Naive thymus-derived CD8-positive, alpha-beta T cell (primary cell): ENCODE measurements at regions of chr2 and their contacts with region 1.

Region 1: GRCh38 chr2:85595301-85596025 is at the start of gene RNF181:
- DNase-seq: peak; percentile 73 to 96 (median 90)
- ATAC-seq: peak; percentile 98 to 99
- H3K4me3 Mint-ChIP-seq: peak within 1 kb of the TSS; percentile 96 to 100 (median 98)
- H3K27ac Mint-ChIP-seq: peak within 1 kb of the TSS; percentile 96 to 100 (median 98)
- H3K4me1 Mint-ChIP-seq: peaks cover 19 to 51% (median 36%) of the 10 kb centered on the region in 4 donors
- H3K27me3 Mint-ChIP-seq: no peaks in the 10 kb centered on the region
- polyA plus RNA-seq, gene RNF181: 165 to 206 (median 173) TPM

Region 2: GRCh38 chr2:85501248-85501647 is 94.2 kb before region 1 on chr2:
- POLR2A ChIA-PET with region 1: no interaction called
- DNase-seq: no peak
- ATAC-seq: no peak
- H3K4me3 Mint-ChIP-seq: no peak overlapping the region
- H3K27ac Mint-ChIP-seq: no peak overlapping the region
- H3K4me1 Mint-ChIP-seq: peaks cover 0 to 8% (median 2%) of the 10 kb centered on the region in 4 donors
- H3K27me3 Mint-ChIP-seq: no peaks in the 10 kb centered on the region

Region 3: GRCh38 chr2:85516653-85517406 is 78.6 kb before region 1 on chr2:
- POLR2A ChIA-PET with region 1: no interaction called
- DNase-seq: no peak
- ATAC-seq: no peak
- H3K4me3 Mint-ChIP-seq: no peak overlapping the region
- H3K27ac Mint-ChIP-seq: peak overlapping the region in 2 of 10 donors; percentile 22 to 90
- H3K4me1 Mint-ChIP-seq: peaks cover 0 to 2% (median 0%) of the 10 kb centered on the region in 4 donors
- H3K27me3 Mint-ChIP-seq: no peaks in the 10 kb centered on the region

Region 4: GRCh38 chr2:85538486-85539360 is 56.7 kb before region 1 on chr2 and contains the start of gene MAT2A:
- POLR2A ChIA-PET with region 1: interaction called, 23 read pairs
- DNase-seq: peak; percentile 71 to 91 (median 86)
- ATAC-seq: peak; percentile 74 to 76
- H3K4me3 Mint-ChIP-seq: peak within 1 kb of the TSS; percentile 91 to 96 (median 95)
- H3K27ac Mint-ChIP-seq: peak within 1 kb of the TSS; percentile 90 to 98 (median 95)
- H3K4me1 Mint-ChIP-seq: peaks cover 21 to 50% (median 40%) of the 10 kb centered on the region in 4 donors
- H3K27me3 Mint-ChIP-seq: no peaks in the 10 kb centered on the region
- polyA plus RNA-seq, gene MAT2A: 68.1 to 103 (median 73.0) TPM

Region 5: GRCh38 chr2:85551698-85552678 is 43.5 kb before region 1 on chr2:
- POLR2A ChIA-PET with region 1: interaction called, 13 read pairs
- DNase-seq: peak; percentile 78 to 95 (median 90)
- ATAC-seq: peak; percentile 97 to 99
- H3K4me3 Mint-ChIP-seq: no peak overlapping the region
- H3K27ac Mint-ChIP-seq: peak overlapping the region in 8 of 10 donors; percentile 29 to 75 (median 50)
- H3K4me1 Mint-ChIP-seq: peaks cover 4 to 7% (median 6%) of the 10 kb centered on the region in 4 donors
- H3K27me3 Mint-ChIP-seq: no peaks in the 10 kb centered on the region

Region 6: GRCh38 chr2:85577386-85578242 is 17.8 kb before region 1 on chr2 and contains the start of gene VAMP8:
- POLR2A ChIA-PET with region 1: interaction called, 88 read pairs
- DNase-seq: peak; percentile 41 to 80 (median 49)
- ATAC-seq: peak; percentile 81 to 86
- H3K4me3 Mint-ChIP-seq: peak within 1 kb of the TSS; percentile 88 to 98 (median 94)
- H3K27ac Mint-ChIP-seq: peak within 1 kb of the TSS; percentile 88 to 98 (median 93)
- H3K4me1 Mint-ChIP-seq: peaks cover 23 to 43% (median 43%) of the 10 kb centered on the region in 4 donors
- H3K27me3 Mint-ChIP-seq: no peaks in the 10 kb centered on the region
- polyA plus RNA-seq, gene VAMP8: 321 to 405 (median 373) TPM

Region 7: GRCh38 chr2:85584857-85585783 is 10.3 kb before region 1 on chr2:
- POLR2A ChIA-PET with region 1: interaction called, 88 read pairs
- DNase-seq: peak in 3 of 10 donors; percentile 20 to 42 (median 40)
- ATAC-seq: peak; percentile 55 to 59
- H3K4me3 Mint-ChIP-seq: peak overlapping the region; percentile 80 to 93 (median 89)
- H3K27ac Mint-ChIP-seq: peak overlapping the region; percentile 86 to 97 (median 93)
- H3K4me1 Mint-ChIP-seq: peaks cover 34 to 76% (median 65%) of the 10 kb centered on the region in 4 donors
- H3K27me3 Mint-ChIP-seq: no peaks in the 10 kb centered on the region

Region 8: DNA sequence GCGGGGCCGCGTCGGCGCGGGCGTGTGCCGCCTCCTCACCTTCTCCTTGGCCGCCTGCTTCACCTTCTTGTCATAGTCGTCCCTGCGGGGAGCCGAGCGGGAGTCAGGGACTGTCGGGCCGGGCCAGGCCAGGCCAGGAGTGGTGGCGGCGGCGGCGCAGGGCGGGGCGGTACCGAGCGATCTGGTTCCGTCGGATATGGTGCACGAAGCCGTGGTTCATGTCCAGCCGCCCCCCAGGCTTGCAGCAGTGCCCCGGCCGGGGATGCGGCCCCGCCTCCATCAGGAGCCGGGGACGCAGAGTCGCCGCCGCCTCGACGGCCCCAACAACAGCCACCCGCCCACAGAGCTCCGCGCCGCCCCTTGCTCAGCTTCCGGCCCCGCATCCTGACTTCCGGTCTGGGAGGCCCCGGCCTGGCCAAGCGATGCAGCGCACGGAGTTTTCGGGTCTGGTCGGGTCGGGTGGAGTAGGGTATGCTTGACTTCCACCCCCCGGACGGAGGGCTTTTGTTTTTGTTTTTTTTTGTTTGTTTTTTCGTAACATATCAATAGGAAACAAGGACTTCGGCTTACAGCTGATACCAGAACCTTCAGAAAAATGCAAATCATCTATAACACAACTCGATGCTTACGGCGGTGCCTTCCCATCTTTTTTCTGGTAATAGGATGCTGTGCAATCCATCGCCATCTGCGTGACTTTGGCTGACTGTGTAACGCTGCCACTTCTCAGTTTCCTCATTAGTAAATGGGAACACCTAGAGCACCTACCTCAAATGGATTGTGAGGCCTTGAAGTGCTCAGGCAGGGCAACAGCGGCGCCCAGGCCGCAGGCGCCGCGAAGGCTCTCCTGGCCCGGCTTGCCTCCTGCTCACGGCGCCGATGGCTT is 16.5 kb after region 1 on chr2 and contains the start of gene C2orf68:
- POLR2A ChIA-PET with region 1: interaction called, 31 read pairs
- DNase-seq: peak; percentile 65 to 89 (median 77)
- ATAC-seq: peak; percentile 60 to 63
- H3K4me3 Mint-ChIP-seq: peak within 1 kb of the TSS; percentile 91 to 99 (median 98)
- H3K27ac Mint-ChIP-seq: peak within 1 kb of the TSS; percentile 72 to 98 (median 95)
- H3K4me1 Mint-ChIP-seq: peaks cover 12 to 42% (median 32%) of the 10 kb centered on the region in 4 donors
- H3K27me3 Mint-ChIP-seq: no peaks in the 10 kb centered on the region
- polyA plus RNA-seq, gene C2orf68: 15.7 to 21.1 (median 20.4) TPM